GM12878 (cell line): ENCODE measurements at regions of chr15 and their contacts with region 1.

Region 1: DNA sequence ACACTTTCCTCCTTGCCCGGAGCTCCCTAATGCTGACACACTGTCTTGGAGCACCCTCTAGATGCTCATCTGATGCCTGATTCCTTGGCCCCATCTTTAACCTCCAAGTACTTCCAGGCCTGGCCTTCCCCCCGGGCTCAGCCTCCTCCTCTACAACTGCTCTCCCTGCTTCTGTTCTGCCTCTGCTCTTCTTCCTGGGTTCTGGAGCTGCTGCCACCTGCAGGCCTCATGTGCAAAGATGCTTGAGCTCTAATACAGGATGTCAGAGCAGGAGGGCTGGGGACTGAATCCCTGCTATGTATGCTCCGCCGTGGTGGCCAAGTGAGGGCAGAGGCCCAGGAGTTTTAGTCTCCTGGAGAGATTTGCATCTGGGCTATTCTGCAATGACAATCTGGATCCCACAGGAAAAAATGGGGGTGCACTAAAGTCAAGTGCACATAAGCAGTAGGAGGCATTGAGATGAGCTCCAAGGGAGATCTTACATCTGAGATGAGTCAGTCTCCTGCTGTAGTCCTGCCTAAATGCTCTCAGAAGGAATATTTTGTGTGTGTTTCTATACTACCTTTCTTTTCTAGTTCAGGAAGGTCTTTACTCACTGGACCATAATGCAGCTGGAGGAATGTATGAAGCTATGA is 296.3 kb downstream of the UACA start:
- DNase-seq: no peak
- ATAC-seq: peak; percentile 66
- H3K4me3 ChIP-seq: no peak overlapping the region
- H3K27ac ChIP-seq: no peak overlapping the region
- H3K4me1 ChIP-seq: peaks cover 36% of the 10 kb centered on the region
- H3K27me3 ChIP-seq: no peaks in the 10 kb centered on the region
- CTCF ChIP-seq: peak; percentile 66 to 78 (median 72)
- EP300 ChIP-seq: no peak
- POLR2A ChIP-seq: no peak
- RAD21 ChIP-seq: peak; percentile 71

Region 2: GRCh38 chr15:69576035-69576526 is 890.9 kb before region 1 on chr15:
- CTCF ChIA-PET with region 1: interaction called, 5 read pairs
- POLR2A ChIA-PET with region 1: no interaction called
- RAD21 ChIA-PET with region 1: interaction called, 8 read pairs
- SMC1A ChIA-PET with region 1: interaction called, 6 read pairs
- in situ Hi-C with region 1: no loop called
- intact Hi-C with region 1: loop called (anchors 5 kb)
- DNase-seq: peak; percentile 13
- ATAC-seq: peak; percentile 93
- H3K4me3 ChIP-seq: no peak overlapping the region
- H3K27ac ChIP-seq: no peak overlapping the region
- H3K4me1 ChIP-seq: peaks cover 5% of the 10 kb centered on the region; the same call in 1 of the 2 replicates
- H3K27me3 ChIP-seq: peaks cover 0 to 3% of the 10 kb centered on the region in 2 experiments
- CTCF ChIP-seq: peak; percentile 71 to 76 (median 71)
- EP300 ChIP-seq: no peak
- POLR2A ChIP-seq: no peak
- RAD21 ChIP-seq: peak; percentile 71

Region 3: GRCh38 chr15:69729161-69729748 is 737.8 kb before region 1 on chr15:
- CTCF ChIA-PET with region 1: interaction called, 13 read pairs
- POLR2A ChIA-PET with region 1: no interaction called
- RAD21 ChIA-PET with region 1: no interaction called
- SMC1A ChIA-PET with region 1: no interaction called
- in situ Hi-C with region 1: no loop called
- intact Hi-C with region 1: loop called (anchors 2 kb)
- DNase-seq: no peak
- ATAC-seq: peak; percentile 55; the same call in 2 of the 3 replicates
- H3K4me3 ChIP-seq: no peak overlapping the region
- H3K27ac ChIP-seq: no peak overlapping the region
- H3K4me1 ChIP-seq: peaks cover 8% of the 10 kb centered on the region; the same call in 1 of the 2 replicates
- H3K27me3 ChIP-seq: peaks cover 0 to 5% of the 10 kb centered on the region in 2 experiments; a peak in 2 of 4 replicates
- CTCF ChIP-seq: peak; percentile 67 to 82 (median 71)
- EP300 ChIP-seq: no peak
- POLR2A ChIP-seq: no peak
- RAD21 ChIP-seq: peak; percentile 83

Region 4: DNA sequence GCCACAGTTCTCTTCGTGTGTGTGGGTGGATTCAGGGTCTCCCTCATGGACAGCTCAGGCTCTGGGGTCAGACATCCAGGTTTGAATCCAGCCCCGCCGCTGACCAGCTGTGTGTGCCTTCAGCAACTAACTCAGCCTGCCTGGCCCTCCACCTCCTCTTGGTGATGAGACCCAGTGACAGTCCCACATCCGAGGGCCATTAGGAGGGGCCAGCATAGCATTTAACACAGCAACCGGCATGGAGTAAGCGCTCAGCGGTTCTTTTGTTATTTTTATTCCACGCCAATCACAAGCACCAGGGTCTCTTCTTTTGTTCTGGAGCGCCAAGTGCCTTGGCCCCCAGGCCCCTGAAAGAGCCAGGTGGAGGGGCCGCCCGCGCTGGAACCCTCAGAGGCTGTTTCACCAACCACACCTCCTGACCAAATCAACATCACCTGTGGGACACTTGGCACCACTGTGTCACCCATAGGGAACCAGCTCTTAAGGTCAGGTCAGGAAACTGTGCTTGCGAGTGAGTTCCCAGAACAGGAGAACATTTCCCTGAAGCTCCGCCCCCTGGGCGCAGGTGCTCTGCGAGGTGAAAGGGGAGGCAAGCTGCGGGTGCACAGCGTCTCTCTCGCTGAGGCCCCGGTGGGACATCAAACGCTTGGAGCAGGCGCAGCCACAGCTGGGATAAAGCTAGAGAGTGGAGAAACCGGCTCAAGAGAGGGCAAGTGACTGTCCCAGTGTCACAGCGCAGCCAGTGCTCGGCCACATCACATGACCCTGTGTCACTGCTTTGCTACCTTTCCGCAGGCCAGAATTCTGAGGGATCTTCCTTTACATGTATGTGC is 15.0 kb before region 1 on chr15:
- CTCF ChIA-PET with region 1: interaction called, 10 read pairs
- POLR2A ChIA-PET with region 1: no interaction called
- RAD21 ChIA-PET with region 1: interaction called, 4 read pairs
- SMC1A ChIA-PET with region 1: interaction called, 13 read pairs
- in situ Hi-C with region 1: no loop called
- intact Hi-C with region 1: no loop called
- DNase-seq: no peak
- ATAC-seq: no peak
- H3K4me3 ChIP-seq: no peak overlapping the region
- H3K27ac ChIP-seq: no peak overlapping the region
- H3K4me1 ChIP-seq: no peaks in the 10 kb centered on the region; the same call in 1 of the 2 replicates
- H3K27me3 ChIP-seq: peaks cover 0 to 6% of the 10 kb centered on the region in 2 experiments; a peak in 2 of 4 replicates
- CTCF ChIP-seq: no peak
- EP300 ChIP-seq: no peak
- POLR2A ChIP-seq: no peak
- RAD21 ChIP-seq: no peak

Region 5: DNA sequence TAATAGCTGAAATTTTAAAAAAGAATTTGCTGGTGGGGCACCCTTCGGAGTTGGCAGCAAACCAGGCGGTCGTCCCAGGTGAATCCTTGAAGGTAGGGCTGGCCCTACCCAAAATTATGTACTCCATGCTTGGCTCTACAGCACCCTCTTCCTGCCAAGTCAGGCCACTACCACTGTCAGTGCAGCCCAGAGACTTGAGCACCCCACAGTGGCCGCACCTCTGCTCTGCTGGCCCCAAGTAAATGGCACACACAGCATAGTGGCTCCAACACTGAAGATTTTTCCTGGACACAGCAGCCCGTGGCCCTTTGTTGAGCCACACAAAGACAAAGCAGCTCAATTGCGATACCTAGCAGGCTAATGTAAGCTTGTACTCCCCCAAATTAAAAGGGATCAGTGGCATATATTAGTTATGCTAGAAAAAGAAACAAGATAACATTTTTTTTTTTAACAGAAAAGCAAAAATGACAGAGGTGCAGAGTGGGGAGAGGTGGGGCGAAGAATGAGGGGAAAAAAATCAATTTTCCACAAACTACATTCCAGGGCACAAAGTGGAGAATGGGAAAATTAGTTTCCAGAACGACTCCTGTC is 45.9 kb after region 1 on chr15:
- CTCF ChIA-PET with region 1: interaction called, 18 read pairs
- POLR2A ChIA-PET with region 1: no interaction called
- RAD21 ChIA-PET with region 1: interaction called, 6 read pairs
- SMC1A ChIA-PET with region 1: no interaction called
- in situ Hi-C with region 1: no loop called
- intact Hi-C with region 1: loop called (anchors 1 kb)
- DNase-seq: no peak
- ATAC-seq: peak; percentile 99
- H3K4me3 ChIP-seq: no peak overlapping the region
- H3K27ac ChIP-seq: no peak overlapping the region
- H3K4me1 ChIP-seq: peaks cover 15% of the 10 kb centered on the region
- H3K27me3 ChIP-seq: no peaks in the 10 kb centered on the region; a peak in 1 of 4 replicates
- CTCF ChIP-seq: peak; percentile 96 to 99 (median 98); a peak in 5 of 6 replicates
- EP300 ChIP-seq: no peak
- POLR2A ChIP-seq: no peak
- RAD21 ChIP-seq: peak; percentile 90